A673 (cell line): ENCODE measurements at regions of chr5 and their contacts with region 1.

Region 1: DNA sequence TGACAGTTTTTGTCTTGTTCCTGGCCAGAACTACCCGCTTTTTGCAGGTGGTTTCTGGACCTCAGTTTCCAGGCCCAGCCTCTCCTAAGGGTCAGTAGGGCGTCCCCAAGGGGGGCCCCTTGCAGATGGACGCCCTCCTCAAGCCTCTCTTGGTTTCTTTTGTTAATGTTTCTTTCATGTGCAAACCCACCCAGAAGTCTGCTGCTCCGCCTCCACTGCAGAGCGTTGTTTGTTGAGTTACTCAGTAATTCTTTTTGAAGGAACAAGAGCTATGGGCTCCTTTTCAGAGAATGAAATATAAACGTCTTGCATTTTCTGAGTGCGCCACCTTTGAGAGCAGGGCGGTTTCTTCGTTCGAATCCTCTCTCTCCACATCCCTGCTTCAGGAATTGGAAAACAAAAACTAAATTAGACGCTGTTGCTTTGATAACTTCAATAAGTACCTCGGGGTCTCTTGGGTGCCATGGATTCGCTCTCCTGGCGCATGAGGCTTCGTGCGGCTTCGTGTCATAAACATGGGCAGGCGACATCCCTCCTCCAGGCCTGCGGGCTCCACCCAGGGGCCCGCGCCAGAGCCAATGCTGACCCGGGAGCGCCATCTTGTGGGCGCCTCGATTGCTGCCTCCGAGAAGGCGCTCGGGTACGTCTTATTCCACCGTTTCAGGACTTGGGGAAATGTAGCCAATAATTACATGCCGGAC is 38.3 kb upstream of the CKMT2 start:
- DNase-seq: peak; percentile 89
- H3K4me3 ChIP-seq: no peak overlapping the region
- H3K27ac ChIP-seq: no peak overlapping the region
- H3K4me1 ChIP-seq: peaks cover 5% of the 10 kb centered on the region
- H3K27me3 ChIP-seq: no peaks in the 10 kb centered on the region
- CTCF ChIP-seq: peak; percentile 98

Region 2: DNA sequence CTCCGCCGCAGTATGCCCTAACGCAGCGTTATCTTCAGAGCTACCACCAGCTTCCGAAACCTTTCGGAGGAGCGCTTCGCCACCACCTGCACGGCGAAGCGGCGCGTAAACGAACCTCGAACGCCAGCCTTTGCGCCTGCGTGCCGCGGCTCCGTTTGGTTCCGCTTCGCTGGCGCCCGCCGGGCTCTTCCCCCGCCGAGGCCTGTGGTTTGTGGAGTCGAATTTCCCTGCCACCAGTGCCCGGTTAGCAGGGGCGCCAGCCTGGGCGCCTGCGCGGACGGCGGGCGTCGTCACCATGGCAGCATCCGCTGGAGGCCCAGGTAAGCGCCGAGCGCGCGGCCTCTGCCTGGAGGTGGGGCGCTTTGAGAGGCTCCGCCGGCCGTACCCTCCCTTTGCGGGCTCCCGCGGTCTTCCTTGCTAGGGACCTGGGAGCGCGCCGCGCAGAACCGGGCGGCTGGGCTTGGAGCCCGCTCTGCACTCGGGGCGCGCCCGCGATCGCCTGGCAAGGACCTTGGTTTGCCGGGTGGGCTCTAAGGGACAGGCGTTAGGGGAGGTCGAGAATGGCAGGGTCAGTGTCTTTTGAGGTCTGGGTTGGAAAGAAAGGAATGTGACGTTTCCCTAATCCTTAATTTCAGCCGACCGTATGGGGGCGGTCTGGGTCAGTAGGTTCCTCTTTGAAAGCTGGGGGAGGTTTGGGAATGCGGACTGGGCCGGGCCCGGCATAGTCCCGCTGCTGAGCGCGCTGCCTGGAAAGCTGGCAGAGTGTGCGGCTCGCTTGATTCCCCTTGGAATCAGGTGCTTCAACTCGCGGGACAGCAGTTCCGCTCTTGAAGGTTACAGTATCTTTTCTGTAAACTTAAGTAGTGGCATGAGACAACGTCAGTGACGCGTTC is 706.7 kb before region 1 on chr5 and contains the start of gene FAM151B:
- CTCF ChIA-PET with region 1: no interaction called
- POLR2A ChIA-PET with region 1: no interaction called
- intact Hi-C with region 1: loop called (anchors 10 kb)
- DNase-seq: peak; percentile 94
- H3K4me3 ChIP-seq: peak within 1 kb of the TSS; percentile 72
- H3K27ac ChIP-seq: peak within 1 kb of the TSS; percentile 64
- H3K4me1 ChIP-seq: no peaks in the 10 kb centered on the region
- H3K27me3 ChIP-seq: no peaks in the 10 kb centered on the region
- CTCF ChIP-seq: peak; percentile 32; the same call in 1 of the 2 replicates
- total RNA-seq, gene FAM151B: 4.0 and 4.3 TPM in 2 replicates

Region 3: DNA sequence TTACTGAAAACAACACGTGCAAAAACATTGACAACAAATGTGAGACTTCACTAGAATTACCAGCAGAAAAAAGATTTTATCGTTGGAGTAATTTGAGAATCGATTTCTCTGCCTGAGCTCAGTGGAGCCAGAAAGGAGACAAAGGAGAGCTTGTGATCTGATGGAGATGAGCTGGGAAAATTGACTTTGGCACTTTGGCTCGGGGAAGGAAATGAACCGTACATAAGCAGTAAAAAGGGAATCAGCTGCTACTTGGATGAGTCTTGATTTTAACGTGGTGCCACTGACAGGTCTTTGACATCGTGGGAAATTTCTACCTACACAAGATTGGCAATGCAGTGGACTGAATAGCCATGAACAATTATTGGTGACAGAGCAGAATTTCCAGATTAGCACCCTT is 1328.1 kb after region 1 on chr5:
- CTCF ChIA-PET with region 1: no interaction called
- POLR2A ChIA-PET with region 1: no interaction called
- intact Hi-C with region 1: no loop called
- DNase-seq: no peak
- H3K4me3 ChIP-seq: no peak overlapping the region
- H3K27ac ChIP-seq: no peak overlapping the region
- H3K4me1 ChIP-seq: no peaks in the 10 kb centered on the region
- H3K27me3 ChIP-seq: peaks cover 5% of the 10 kb centered on the region
- CTCF ChIP-seq: no peak